Breast epithelium (tissue), 4 donors: ENCODE measurements at regions of chr12 and their contacts with region 1.

Region 1: DNA sequence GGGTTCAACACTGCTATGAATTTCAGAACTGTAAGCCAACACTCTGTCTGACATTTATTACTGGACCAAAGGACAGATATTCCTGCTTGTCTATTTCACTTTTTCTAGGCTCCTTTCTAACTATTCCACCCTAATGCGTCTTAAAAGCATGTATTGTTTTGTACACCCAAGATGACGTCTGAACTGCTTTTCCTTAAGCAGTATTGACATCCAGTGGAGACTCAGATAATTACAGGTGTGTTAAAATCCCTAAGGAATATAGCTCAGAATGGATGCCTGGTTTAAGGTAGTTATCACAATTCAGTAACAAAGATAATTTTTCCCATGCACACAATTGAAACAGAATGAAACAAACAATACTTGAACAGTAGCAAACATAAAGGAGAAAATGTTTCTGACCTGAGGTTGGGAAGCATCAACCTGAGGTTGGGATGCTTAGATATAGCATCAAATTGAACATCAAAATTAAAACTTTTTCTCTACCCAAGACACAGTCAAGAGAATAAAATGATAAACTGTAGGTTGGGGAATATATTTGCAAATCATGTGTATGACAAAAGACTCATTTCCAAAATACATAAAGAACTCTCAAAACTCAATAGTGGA is 93.7 kb upstream of the PTPRR start:
- DNase-seq: no peak
- H3K4me3 ChIP-seq: no peak overlapping the region
- H3K27ac ChIP-seq: no peak overlapping the region
- H3K4me1 ChIP-seq: no peaks in the 10 kb centered on the region
- H3K27me3 ChIP-seq: no peaks in the 10 kb centered on the region
- CTCF ChIP-seq: peak; percentile 39 to 66 (median 64)
- POLR2A ChIP-seq: no peak

Region 2: DNA sequence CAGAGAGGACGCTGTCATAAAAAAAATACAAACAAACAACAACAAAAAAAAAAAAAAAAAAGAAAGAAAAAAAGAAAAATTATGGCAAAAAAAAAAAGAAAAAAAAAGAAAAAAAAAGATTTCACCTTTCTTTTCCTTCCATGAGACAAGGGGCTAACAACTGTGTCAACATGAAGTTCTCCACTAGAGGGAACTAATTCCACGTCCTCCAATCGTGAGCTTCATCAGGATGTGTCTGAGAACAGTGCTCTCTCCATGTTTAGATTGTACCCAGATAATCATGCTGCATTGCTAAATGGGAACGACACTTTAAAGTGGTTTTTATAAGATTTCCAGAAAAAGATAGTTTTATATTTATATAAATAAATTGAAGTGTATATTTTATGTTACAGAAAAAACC is 280.9 kb before region 1 on chr12:
- intact Hi-C with region 1: loop called (anchors 10 kb)
- DNase-seq: no peak
- H3K4me3 ChIP-seq: no peak overlapping the region
- H3K27ac ChIP-seq: no peak overlapping the region
- H3K4me1 ChIP-seq: no peaks in the 10 kb centered on the region
- H3K27me3 ChIP-seq: no peaks in the 10 kb centered on the region
- CTCF ChIP-seq: peak in 2 of 3 donors; percentile 57 to 61
- POLR2A ChIP-seq: no peak

Region 3: DNA sequence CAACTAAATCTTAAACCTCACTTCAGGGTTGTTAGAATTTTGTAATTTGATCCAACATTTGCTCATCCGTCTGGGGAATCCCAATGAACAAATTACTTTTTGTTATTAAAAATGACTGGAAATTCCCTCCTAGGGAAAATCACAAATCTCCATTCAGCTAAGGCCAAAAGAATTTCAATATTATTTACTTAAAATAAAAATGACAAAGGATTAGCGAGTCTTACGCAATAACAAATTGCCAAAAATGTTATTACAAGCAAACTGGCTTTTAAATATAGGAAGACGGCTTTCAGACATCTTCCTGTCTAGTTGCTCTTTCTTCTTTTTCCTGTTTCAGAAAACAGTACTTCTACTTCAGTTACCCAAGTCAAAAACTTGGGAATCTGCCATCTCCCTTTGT is 235.9 kb after region 1 on chr12:
- intact Hi-C with region 1: no loop called
- DNase-seq: no peak
- H3K4me3 ChIP-seq: no peak overlapping the region
- H3K27ac ChIP-seq: no peak overlapping the region
- H3K4me1 ChIP-seq: no peaks in the 10 kb centered on the region
- H3K27me3 ChIP-seq: no peaks in the 10 kb centered on the region
- CTCF ChIP-seq: no peak
- POLR2A ChIP-seq: no peak